Esophagus squamous epithelium (tissue), 5 donors: ENCODE measurements at regions of chr4 and their contacts with region 1.

Region 1: GRCh38 chr4:8472689-8473197 is 32.2 kb downstream of the TRMT44 start:
- DNase-seq: no peak
- H3K4me3 ChIP-seq: no peak overlapping the region
- H3K27ac ChIP-seq: peak overlapping the region; percentile 5 to 88 (median 49)
- H3K4me1 ChIP-seq: peaks cover 0 to 30% (median 18%) of the 10 kb centered on the region in 3 donors
- H3K27me3 ChIP-seq: no peaks in the 10 kb centered on the region
- CTCF ChIP-seq: no peak
- POLR2A ChIP-seq: no peak

Region 2: GRCh38 chr4:8594097-8595038 is 121.6 kb after region 1 on chr4:
- intact Hi-C with region 1: loop called (anchors 5 kb)
- DNase-seq: no peak
- H3K4me3 ChIP-seq: no peak overlapping the region
- H3K27ac ChIP-seq: no peak overlapping the region
- H3K4me1 ChIP-seq: peaks cover 0 to 21% (median 5%) of the 10 kb centered on the region in 3 donors
- H3K27me3 ChIP-seq: peaks cover 6 to 63% (median 7%) of the 10 kb centered on the region in 4 donors
- CTCF ChIP-seq: peak; percentile 17 to 68 (median 52)
- POLR2A ChIP-seq: no peak

Region 3: DNA sequence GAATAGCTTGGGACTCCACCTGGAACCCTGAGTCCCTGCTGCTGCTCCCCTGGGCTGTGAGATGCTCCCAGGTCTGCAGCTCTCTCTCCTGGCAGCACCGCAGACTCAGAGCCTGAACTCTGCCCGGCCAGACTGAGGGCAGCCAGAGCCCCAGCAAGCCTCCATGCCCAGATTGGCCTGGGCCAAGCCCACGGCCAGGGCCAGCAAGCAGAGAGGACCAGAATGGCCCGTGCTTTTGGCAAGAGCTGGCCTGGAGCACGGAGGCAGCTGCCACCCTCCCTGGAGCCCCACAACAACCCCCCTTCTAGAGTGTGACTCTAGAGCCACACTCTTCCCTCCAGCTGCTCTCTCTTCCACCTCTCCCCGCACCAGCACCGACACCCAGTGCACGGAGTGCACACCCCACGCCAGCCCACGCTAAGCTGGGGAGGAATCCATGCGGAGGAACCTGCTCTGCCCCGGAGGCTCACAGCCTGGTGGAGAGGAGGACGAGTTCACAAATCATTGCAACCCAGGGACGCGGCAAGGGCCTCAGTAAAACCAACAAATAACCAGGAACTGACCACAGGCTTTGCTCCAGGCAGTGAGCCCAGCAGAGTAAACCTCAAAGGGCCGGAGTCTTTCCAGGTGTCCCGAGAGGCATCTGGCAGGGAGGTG is 288.6 kb after region 1 on chr4:
- intact Hi-C with region 1: no loop called
- DNase-seq: no peak
- H3K4me3 ChIP-seq: no peak overlapping the region
- H3K27ac ChIP-seq: no peak overlapping the region
- H3K4me1 ChIP-seq: no peaks in the 10 kb centered on the region
- H3K27me3 ChIP-seq: peaks cover 0 to 56% (median 0%) of the 10 kb centered on the region in 4 donors
- CTCF ChIP-seq: no peak
- POLR2A ChIP-seq: no peak